A673 (cell line): ENCODE measurements at regions of chr11 and their contacts with region 1.

Region 1: GRCh38 chr11:102244681-102245409 is 72.4 kb upstream of the BIRC3 start:
- DNase-seq: no peak
- H3K4me3 ChIP-seq: no peak overlapping the region
- H3K27ac ChIP-seq: no peak overlapping the region
- H3K4me1 ChIP-seq: no peaks in the 10 kb centered on the region
- H3K27me3 ChIP-seq: no peaks in the 10 kb centered on the region
- CTCF ChIP-seq: no peak

Region 2: GRCh38 chr11:101797335-101797734 is 447.5 kb before region 1 on chr11:
- CTCF ChIA-PET with region 1: no interaction called
- POLR2A ChIA-PET with region 1: no interaction called
- intact Hi-C with region 1: no loop called
- DNase-seq: no peak
- H3K4me3 ChIP-seq: no peak overlapping the region
- H3K27ac ChIP-seq: no peak overlapping the region
- H3K4me1 ChIP-seq: no peaks in the 10 kb centered on the region
- H3K27me3 ChIP-seq: no peaks in the 10 kb centered on the region
- CTCF ChIP-seq: no peak

Region 3: DNA sequence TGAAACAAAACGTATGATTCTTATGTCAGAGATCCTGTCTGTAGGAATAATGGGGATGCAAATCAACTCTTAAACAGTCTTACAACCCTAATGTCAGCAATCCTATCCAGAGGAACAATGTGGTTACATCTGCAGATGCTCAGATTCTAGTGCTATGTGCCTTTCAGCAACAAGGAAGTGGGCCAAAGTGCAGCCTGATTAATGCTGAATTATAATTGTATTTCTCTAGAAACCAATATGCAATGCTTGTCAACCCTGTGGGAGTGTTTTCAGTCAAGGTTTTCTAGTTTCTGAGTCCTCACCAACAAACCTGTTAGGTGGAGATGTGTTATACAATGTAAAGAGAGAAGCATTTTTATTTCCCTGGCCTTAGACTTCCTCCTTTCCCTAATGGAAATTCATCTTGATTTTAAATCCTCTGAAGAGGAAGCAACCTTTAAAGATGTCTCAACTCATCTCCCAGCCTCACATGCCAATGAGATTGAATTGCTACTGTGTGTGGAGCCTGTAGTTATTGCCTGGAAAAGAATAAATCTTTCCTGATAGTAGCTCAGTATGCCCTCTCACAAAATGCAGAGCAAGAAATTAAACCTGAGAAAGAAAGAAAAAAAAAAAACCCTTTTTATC is 233.9 kb after region 1 on chr11:
- CTCF ChIA-PET with region 1: no interaction called
- POLR2A ChIA-PET with region 1: interaction called, 10 read pairs
- intact Hi-C with region 1: no loop called
- DNase-seq: no peak
- H3K4me3 ChIP-seq: no peak overlapping the region
- H3K27ac ChIP-seq: no peak overlapping the region
- H3K4me1 ChIP-seq: peaks cover 19% of the 10 kb centered on the region
- H3K27me3 ChIP-seq: no peaks in the 10 kb centered on the region
- CTCF ChIP-seq: no peak